Tibial artery (tissue), 4 donors: ENCODE measurements at regions of chr14 and their contacts with region 1.

Region 1: GRCh38 chr14:101964297-101965144 is at the start of gene DYNC1H1:
- DNase-seq: peak; percentile 89 to 95
- H3K4me3 ChIP-seq: peak within 1 kb of the TSS; percentile 74 to 99
- H3K27ac ChIP-seq: peak within 1 kb of the TSS; percentile 94 to 97
- H3K4me1 ChIP-seq: peaks cover 0 to 57% (median 16%) of the 10 kb centered on the region in 4 donors
- H3K27me3 ChIP-seq: no peaks in the 10 kb centered on the region
- CTCF ChIP-seq: no peak

Region 2: DNA sequence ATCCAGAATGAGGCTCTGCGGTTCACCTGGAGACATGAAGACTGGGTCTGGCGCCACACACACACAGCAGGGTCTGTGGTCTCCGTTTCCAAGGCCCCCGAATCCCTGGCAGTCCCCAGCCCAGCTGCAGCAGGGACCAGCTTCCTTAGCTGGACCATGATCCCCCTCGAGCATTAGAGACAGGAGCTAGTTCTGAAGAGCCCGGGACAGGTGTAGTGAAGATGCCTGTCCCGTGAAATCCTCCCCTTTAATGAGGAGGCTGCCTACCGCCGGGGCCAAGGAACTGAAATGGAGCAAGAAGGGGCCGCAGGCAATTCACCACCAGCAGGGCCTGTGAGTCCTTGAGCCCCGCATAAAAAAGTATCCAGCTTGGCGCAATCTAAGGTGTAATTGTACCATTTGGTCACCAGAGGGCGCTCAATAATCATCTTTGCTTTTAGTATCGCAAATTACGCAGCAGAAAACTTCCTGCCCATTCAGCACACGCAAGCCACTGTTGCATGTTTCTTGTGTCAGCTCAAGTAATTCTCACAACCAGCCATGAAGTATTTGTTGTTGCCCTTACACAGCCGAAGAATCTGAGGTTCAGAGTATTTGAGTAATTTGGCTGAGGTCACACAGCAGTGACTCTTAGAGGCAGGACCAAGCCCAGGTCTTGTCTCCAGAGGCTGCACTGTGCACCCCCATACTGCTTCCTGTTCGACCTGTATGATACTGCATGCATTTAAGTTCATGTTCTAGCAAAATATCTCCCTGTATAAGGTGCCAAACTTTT is 257.3 kb before region 1 on chr14:
- intact Hi-C with region 1: loop called (anchors 5 kb)
- DNase-seq: no peak
- H3K4me3 ChIP-seq: no peak overlapping the region
- H3K27ac ChIP-seq: no peak overlapping the region
- H3K4me1 ChIP-seq: peaks cover 0 to 16% (median 12%) of the 10 kb centered on the region in 4 donors
- H3K27me3 ChIP-seq: peaks cover 0 to 54% of the 10 kb centered on the region in 2 donors
- CTCF ChIP-seq: peak; percentile 77 to 83

Region 3: GRCh38 chr14:101761032-101761880 is 203.3 kb before region 1 on chr14 and contains the start of gene PPP2R5C:
- intact Hi-C with region 1: loop called (anchors 10 kb)
- DNase-seq: peak; percentile 89 to 97
- H3K4me3 ChIP-seq: peak within 1 kb of the TSS; percentile 82
- H3K27ac ChIP-seq: peak within 1 kb of the TSS; percentile 86 to 90
- H3K4me1 ChIP-seq: peaks cover 0 to 18% (median 6%) of the 10 kb centered on the region in 4 donors
- H3K27me3 ChIP-seq: no peaks in the 10 kb centered on the region
- CTCF ChIP-seq: no peak

Region 4: GRCh38 chr14:102086972-102087761 is 122.6 kb after region 1 on chr14 and contains the start of gene HSP90AA1:
- intact Hi-C with region 1: loop called (anchors 5 kb)
- DNase-seq: peak; percentile 89 to 97
- H3K4me3 ChIP-seq: peak within 1 kb of the TSS; percentile 79 to 90
- H3K27ac ChIP-seq: peak within 1 kb of the TSS; percentile 97 to 98
- H3K4me1 ChIP-seq: peaks cover 0 to 46% (median 33%) of the 10 kb centered on the region in 4 donors
- H3K27me3 ChIP-seq: no peaks in the 10 kb centered on the region
- CTCF ChIP-seq: no peak